Naive thymus-derived CD4-positive, alpha-beta T cell (primary cell): ENCODE measurements at regions of chr12 and their contacts with region 1.

Region 1: DNA sequence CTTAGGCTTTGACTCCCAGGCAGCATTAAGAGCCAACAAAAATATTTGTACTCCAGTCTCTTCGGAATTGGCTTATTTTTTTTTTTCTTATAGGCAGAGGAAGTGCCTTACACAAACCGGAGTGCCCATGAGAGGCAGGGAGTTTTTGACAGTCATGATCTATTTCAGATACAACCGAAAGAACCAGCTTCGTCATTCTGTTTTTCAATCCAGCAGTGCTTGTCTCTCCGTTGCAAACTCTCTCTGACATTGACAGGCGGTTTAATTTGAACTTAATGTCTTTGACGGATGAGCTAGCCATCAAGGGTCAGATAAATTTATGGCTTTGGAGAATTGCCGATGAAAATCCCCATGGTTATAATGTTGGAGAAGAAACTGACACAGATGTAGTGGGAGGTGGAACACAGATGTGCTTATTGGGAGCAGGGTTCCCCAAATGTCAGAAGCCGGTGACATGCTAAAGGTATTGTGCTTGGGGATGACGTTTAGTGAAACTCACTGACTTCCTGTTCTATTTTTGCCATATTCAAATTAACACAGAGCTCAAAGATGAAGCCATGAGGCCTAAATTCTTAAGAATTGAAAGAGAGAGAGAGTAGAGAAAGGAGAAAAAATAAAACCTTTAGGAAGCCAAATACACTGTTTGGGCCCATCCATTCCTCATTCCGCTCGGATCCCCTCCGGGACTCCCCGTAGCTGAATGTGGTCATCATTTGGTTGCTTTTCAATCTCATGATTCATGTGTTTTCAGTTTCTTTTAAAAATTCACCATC is 59.7 kb downstream of the PLXNC1 start:
- DNase-seq: peak in 8 of 9 donors; percentile 24 to 55 (median 48)
- ATAC-seq: peak; percentile 86
- H3K4me3 ChIP-seq: peak overlapping the region; percentile 58
- H3K4me3 Mint-ChIP-seq: peak overlapping the region; percentile 70 to 87 (median 82)
- H3K27ac ChIP-seq: peak overlapping the region; percentile 61
- H3K27ac Mint-ChIP-seq: peak overlapping the region; percentile 90 to 98 (median 94)
- H3K4me1 ChIP-seq: peaks cover 40 to 49% of the 10 kb centered on the region in 2 donors
- H3K4me1 Mint-ChIP-seq: peaks cover 36 to 58% (median 56%) of the 10 kb centered on the region in 7 donors
- H3K27me3 ChIP-seq: no peaks in the 10 kb centered on the region
- H3K27me3 Mint-ChIP-seq: no peaks in the 10 kb centered on the region

Region 2: GRCh38 chr12:93243689-93244513 is 964.1 kb before region 1 on chr12:
- CTCF ChIA-PET with region 1: no interaction called
- POLR2A ChIA-PET with region 1: no interaction called
- intact Hi-C with region 1: loop called in 1 of 2 experiments (anchors 5 kb)
- DNase-seq: peak in 6 of 9 donors; percentile 20 to 60 (median 40)
- ATAC-seq: peak; percentile 68
- H3K4me3 ChIP-seq: no peak overlapping the region
- H3K4me3 Mint-ChIP-seq: peak overlapping the region; percentile 12 to 79 (median 70)
- H3K27ac ChIP-seq: peak overlapping the region; percentile 46
- H3K27ac Mint-ChIP-seq: peak overlapping the region in 8 of 9 donors; percentile 75 to 91 (median 88)
- H3K4me1 ChIP-seq: peaks cover 11 to 23% of the 10 kb centered on the region in 2 donors
- H3K4me1 Mint-ChIP-seq: peaks cover 27 to 65% (median 56%) of the 10 kb centered on the region in 7 donors
- H3K27me3 ChIP-seq: no peaks in the 10 kb centered on the region
- H3K27me3 Mint-ChIP-seq: no peaks in the 10 kb centered on the region

Region 3: DNA sequence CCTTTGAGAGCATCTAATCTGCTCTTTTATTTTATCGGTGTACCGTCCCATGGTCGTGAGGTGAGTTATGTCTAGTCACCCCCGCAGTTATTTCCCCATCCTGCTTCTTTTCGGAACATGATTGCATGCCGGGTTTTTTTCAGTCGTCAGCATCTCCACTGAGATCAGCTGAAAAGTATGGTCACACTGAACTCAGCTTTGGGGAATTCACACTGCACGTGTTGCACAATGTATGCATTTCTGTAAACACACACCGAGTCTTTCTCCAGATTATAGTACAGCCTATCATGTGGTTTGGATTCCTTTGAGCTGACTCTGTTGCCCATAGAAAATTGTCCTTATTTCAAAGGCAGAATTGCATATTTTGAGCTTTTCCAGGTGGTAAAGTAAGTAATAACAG is 35.1 kb before region 1 on chr12:
- CTCF ChIA-PET with region 1: no interaction called
- POLR2A ChIA-PET with region 1: interaction called, 3 read pairs
- intact Hi-C with region 1: loop called (anchors 1 to 2 kb)
- DNase-seq: no peak
- ATAC-seq: peak; percentile 58
- H3K4me3 ChIP-seq: no peak overlapping the region
- H3K4me3 Mint-ChIP-seq: no peak overlapping the region
- H3K27ac ChIP-seq: no peak overlapping the region
- H3K27ac Mint-ChIP-seq: peak overlapping the region in 1 of 9 donors; percentile 36
- H3K4me1 ChIP-seq: peaks cover 14 to 27% of the 10 kb centered on the region in 2 donors
- H3K4me1 Mint-ChIP-seq: peaks cover 39 to 67% (median 59%) of the 10 kb centered on the region in 7 donors
- H3K27me3 ChIP-seq: no peaks in the 10 kb centered on the region
- H3K27me3 Mint-ChIP-seq: peaks cover 0 to 3% (median 0%) of the 10 kb centered on the region in 5 donors

Region 4: GRCh38 chr12:94244165-94245133 is 36.4 kb after region 1 on chr12:
- CTCF ChIA-PET with region 1: no interaction called
- POLR2A ChIA-PET with region 1: no interaction called
- intact Hi-C with region 1: loop called in 1 of 2 experiments (anchors 5 kb)
- DNase-seq: peak in 2 of 9 donors; percentile 2 to 54
- ATAC-seq: peak; percentile 82
- H3K4me3 ChIP-seq: no peak overlapping the region
- H3K4me3 Mint-ChIP-seq: peak overlapping the region in 4 of 10 donors; percentile 0 to 66 (median 30)
- H3K27ac ChIP-seq: no peak overlapping the region
- H3K27ac Mint-ChIP-seq: peak overlapping the region in 7 of 9 donors; percentile 29 to 82 (median 59)
- H3K4me1 ChIP-seq: peaks cover 9 to 31% of the 10 kb centered on the region in 2 donors
- H3K4me1 Mint-ChIP-seq: peaks cover 11 to 43% (median 19%) of the 10 kb centered on the region in 7 donors
- H3K27me3 ChIP-seq: no peaks in the 10 kb centered on the region
- H3K27me3 Mint-ChIP-seq: no peaks in the 10 kb centered on the region

Region 5: GRCh38 chr12:94305130-94305957 is 97.3 kb after region 1 on chr12:
- CTCF ChIA-PET with region 1: no interaction called
- POLR2A ChIA-PET with region 1: no interaction called
- intact Hi-C with region 1: loop called in 1 of 2 experiments (anchors 1 kb)
- DNase-seq: peak in 1 of 9 donors; percentile 69
- ATAC-seq: no peak
- H3K4me3 ChIP-seq: no peak overlapping the region
- H3K4me3 Mint-ChIP-seq: peak overlapping the region in 1 of 10 donors; percentile 70
- H3K27ac ChIP-seq: no peak overlapping the region
- H3K27ac Mint-ChIP-seq: peak overlapping the region in 1 of 9 donors; percentile 87
- H3K4me1 ChIP-seq: no peaks in the 10 kb centered on the region
- H3K4me1 Mint-ChIP-seq: peaks cover 0 to 57% (median 0%) of the 10 kb centered on the region in 7 donors
- H3K27me3 ChIP-seq: no peaks in the 10 kb centered on the region
- H3K27me3 Mint-ChIP-seq: no peaks in the 10 kb centered on the region